Esophagus muscularis mucosa (tissue), 4 donors: ENCODE measurements at regions of chr3 and their contacts with region 1.

Region 1: GRCh38 chr3:125129512-125129962 is 73.7 kb upstream of the HEG1 start:
- DNase-seq: peak; percentile 95
- H3K4me3 ChIP-seq: no peak overlapping the region
- H3K27ac ChIP-seq: peak overlapping the region; percentile 44 to 74 (median 66)
- H3K4me1 ChIP-seq: peaks cover 9 to 30% (median 25%) of the 10 kb centered on the region in 4 donors
- H3K27me3 ChIP-seq: no peaks in the 10 kb centered on the region
- CTCF ChIP-seq: no peak
- EP300 ChIP-seq: no peak
- POLR2A ChIP-seq: no peak

Region 2: GRCh38 chr3:125069452-125069851 is 60.1 kb before region 1 on chr3:
- intact Hi-C with region 1: loop called (anchors 5 kb)
- DNase-seq: no peak
- H3K4me3 ChIP-seq: no peak overlapping the region
- H3K27ac ChIP-seq: no peak overlapping the region
- H3K4me1 ChIP-seq: peaks cover 0 to 4% (median 0%) of the 10 kb centered on the region in 4 donors
- H3K27me3 ChIP-seq: no peaks in the 10 kb centered on the region
- CTCF ChIP-seq: no peak
- EP300 ChIP-seq: no peak
- POLR2A ChIP-seq: no peak

Region 3: DNA sequence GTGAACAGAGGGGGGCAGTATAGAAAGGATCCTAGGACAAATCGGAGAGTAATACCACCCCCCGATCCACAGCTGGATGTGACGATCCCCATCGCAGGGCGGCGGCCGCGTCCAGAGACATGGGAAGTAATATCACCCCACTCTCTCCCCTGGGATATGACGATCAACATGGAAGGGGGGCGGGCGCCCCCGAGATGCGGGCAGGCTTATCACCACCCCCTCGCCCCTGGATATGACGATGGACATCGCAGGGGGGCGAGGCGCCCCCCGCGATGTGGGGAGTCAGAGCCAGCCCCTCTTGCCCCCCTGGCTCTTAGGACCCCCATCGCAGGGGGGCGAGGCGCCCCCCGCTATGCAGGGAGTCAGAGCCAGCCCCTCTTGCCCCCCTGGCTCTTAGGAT is 586.1 kb after region 1 on chr3:
- intact Hi-C with region 1: no loop called
- DNase-seq: no peak
- H3K4me3 ChIP-seq: no peak overlapping the region
- H3K27ac ChIP-seq: no peak overlapping the region
- H3K4me1 ChIP-seq: no peaks in the 10 kb centered on the region
- H3K27me3 ChIP-seq: no peaks in the 10 kb centered on the region
- CTCF ChIP-seq: no peak
- EP300 ChIP-seq: no peak
- POLR2A ChIP-seq: no peak